Calu3 (cell line): ENCODE measurements at regions of chr18 and their contacts with region 1.

Region 1: DNA sequence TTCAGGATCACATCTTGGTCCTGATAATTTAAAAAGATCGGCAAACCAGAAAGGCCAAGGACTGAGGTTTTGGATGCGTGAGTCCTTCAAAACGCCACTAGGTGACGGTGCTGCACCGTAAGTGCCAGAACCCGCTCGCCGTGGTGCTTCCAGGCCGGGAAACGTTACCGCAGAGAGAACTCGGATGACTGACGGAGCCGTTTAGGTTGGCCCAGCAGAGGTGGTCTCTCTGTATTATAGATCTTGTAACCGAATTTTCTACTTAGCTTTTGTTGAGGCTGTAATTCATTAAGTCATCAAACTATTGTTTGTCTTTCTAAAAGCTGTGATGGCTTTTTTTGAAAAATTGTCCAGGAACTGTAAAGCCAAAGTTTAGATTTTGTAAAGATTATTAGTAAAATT is 39.8 kb upstream of the ADCYAP1 start:
- DNase-seq: peak; percentile 71
- H3K4me3 Mint-ChIP-seq: no peak overlapping the region
- H3K27ac Mint-ChIP-seq: no peak overlapping the region
- H3K4me1 Mint-ChIP-seq: no peaks in the 10 kb centered on the region
- H3K27me3 Mint-ChIP-seq: peaks cover 47% of the 10 kb centered on the region
- CTCF ChIP-seq: peak; percentile 94

Region 2: GRCh38 chr18:839224-840022 is 25.4 kb before region 1 on chr18:
- CTCF ChIA-PET with region 1: no interaction called
- intact Hi-C with region 1: loop called (anchors 1 kb)
- DNase-seq: peak; percentile 91
- H3K4me3 Mint-ChIP-seq: no peak overlapping the region
- H3K27ac Mint-ChIP-seq: no peak overlapping the region
- H3K4me1 Mint-ChIP-seq: no peaks in the 10 kb centered on the region
- H3K27me3 Mint-ChIP-seq: no peaks in the 10 kb centered on the region
- CTCF ChIP-seq: peak; percentile 97

Region 3: DNA sequence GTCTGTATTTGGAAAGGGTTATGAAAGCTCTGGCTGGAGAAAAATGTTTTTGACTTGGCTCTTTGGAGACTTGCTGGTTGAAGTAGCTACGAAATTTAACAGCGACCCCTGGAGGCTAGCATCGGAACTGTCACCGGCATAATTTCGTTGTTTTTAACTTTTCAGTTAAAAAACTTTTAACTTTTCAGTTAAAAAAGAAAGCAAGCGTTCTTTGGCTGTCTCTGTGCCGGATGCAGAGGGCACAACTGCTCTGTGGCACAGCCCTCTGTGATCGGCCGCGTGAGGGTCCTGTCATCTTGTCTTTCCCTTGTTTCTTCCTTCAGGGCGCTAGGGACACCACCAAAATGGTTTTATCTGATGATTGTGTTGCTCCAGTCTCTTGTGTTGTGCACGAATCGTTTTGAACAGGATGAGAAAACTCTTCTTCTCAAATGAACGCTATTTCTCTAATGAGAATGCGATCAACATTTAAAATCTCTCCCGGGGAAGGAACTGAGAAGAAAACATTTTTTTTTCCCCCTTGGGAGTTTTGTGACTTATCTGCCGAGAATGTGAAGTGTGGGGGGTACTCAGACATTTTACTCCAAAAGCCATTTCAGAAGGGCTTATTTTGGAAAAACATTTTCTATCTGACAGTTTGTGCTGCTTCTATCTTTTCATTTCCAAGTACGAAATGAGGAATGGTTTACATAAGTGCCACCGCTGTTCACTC is 96.9 kb after region 1 on chr18:
- CTCF ChIA-PET with region 1: interaction called, 7 read pairs
- intact Hi-C with region 1: loop called (anchors 2 kb)
- DNase-seq: peak; percentile 47
- H3K4me3 Mint-ChIP-seq: no peak overlapping the region
- H3K27ac Mint-ChIP-seq: no peak overlapping the region
- H3K4me1 Mint-ChIP-seq: peaks cover 8% of the 10 kb centered on the region
- H3K27me3 Mint-ChIP-seq: peaks cover 74% of the 10 kb centered on the region
- CTCF ChIP-seq: peak; percentile 92

Region 4: GRCh38 chr18:1019191-1019590 is 154.3 kb after region 1 on chr18:
- CTCF ChIA-PET with region 1: no interaction called
- intact Hi-C with region 1: no loop called
- DNase-seq: no peak
- H3K4me3 Mint-ChIP-seq: no peak overlapping the region
- H3K27ac Mint-ChIP-seq: no peak overlapping the region
- H3K4me1 Mint-ChIP-seq: no peaks in the 10 kb centered on the region
- H3K27me3 Mint-ChIP-seq: peaks cover 45% of the 10 kb centered on the region
- CTCF ChIP-seq: no peak

Region 5: DNA sequence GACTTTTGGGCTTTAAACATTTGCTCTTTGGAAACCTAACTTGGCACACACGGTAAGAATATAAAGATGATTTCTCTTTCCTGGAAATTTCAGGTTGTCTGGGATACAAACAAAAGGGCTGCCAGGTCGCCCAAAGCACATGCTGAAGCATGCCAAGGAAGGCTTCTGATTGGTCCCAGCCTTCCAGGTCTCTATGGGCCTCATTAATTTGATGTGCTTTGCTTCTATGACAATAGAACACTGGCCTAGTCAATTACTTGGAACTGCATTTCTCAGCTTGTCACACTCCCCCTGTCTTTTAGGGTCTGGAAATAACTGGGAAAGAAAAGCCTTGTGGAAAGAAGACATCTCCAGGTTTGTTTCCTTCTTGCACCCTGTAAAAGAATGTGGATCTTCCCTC is 268.7 kb after region 1 on chr18:
- CTCF ChIA-PET with region 1: no interaction called
- intact Hi-C with region 1: no loop called
- DNase-seq: no peak
- H3K4me3 Mint-ChIP-seq: no peak overlapping the region
- H3K27ac Mint-ChIP-seq: no peak overlapping the region
- H3K4me1 Mint-ChIP-seq: no peaks in the 10 kb centered on the region
- H3K27me3 Mint-ChIP-seq: peaks cover 15% of the 10 kb centered on the region
- CTCF ChIP-seq: no peak

Region 6: DNA sequence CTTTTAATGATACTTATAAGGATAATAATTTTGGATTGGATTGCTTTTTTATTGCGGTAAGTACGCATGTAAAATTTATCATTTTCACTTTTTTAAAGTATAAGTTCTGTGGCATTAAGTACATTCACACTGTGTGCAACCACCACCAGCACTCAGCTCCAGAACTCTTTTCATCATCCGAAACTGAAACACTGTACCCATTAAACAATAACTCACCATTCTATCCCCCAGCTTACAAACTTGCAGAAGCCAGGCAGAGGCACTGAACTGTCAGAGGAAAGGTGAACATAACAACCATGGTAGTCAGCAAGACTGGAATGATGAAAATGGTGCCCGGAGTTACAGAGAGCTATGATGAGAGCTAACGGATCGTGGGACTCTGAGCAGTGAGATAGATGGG is 505.7 kb after region 1 on chr18:
- CTCF ChIA-PET with region 1: no interaction called
- intact Hi-C with region 1: loop called (anchors 10 kb)
- DNase-seq: no peak
- H3K4me3 Mint-ChIP-seq: no peak overlapping the region
- H3K27ac Mint-ChIP-seq: no peak overlapping the region
- H3K4me1 Mint-ChIP-seq: no peaks in the 10 kb centered on the region
- H3K27me3 Mint-ChIP-seq: no peaks in the 10 kb centered on the region
- CTCF ChIP-seq: no peak

Region 7: GRCh38 chr18:1513519-1513918 is 648.6 kb after region 1 on chr18:
- CTCF ChIA-PET with region 1: no interaction called
- intact Hi-C with region 1: no loop called
- DNase-seq: no peak
- H3K4me3 Mint-ChIP-seq: no peak overlapping the region
- H3K27ac Mint-ChIP-seq: peak overlapping the region; percentile 29
- H3K4me1 Mint-ChIP-seq: no peaks in the 10 kb centered on the region
- H3K27me3 Mint-ChIP-seq: peaks cover 14% of the 10 kb centered on the region
- CTCF ChIP-seq: peak; percentile 18

Region 8: DNA sequence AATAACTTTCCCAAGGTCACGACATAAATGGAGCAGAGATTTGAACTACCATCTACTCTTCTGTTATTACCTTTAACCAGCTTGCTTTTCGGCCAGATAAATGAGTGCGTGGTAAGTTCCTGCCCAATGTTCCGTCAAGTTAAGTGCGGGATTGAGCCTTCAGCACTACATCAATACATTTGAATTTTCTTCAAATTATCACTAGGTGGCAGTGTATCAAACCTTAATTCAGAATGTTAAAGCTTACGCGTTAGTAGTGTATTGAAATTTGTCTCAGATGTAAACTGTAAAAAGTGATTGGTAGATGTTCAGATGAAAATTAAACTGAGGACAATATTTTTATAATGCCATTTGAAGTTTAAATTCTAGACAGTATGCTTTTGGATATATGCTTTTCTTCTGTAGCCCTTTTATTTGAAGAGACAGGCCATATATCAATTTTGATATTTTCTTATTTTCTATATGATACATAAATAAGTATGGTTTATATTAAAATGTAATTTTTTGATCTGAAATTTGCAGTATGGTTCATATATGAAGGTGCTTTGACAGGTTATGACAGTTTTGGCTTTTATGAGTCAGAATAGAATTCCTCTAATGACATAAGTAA is 721.1 kb after region 1 on chr18:
- CTCF ChIA-PET with region 1: no interaction called
- intact Hi-C with region 1: loop called (anchors 10 kb)
- DNase-seq: no peak
- H3K4me3 Mint-ChIP-seq: no peak overlapping the region
- H3K27ac Mint-ChIP-seq: no peak overlapping the region
- H3K4me1 Mint-ChIP-seq: no peaks in the 10 kb centered on the region
- H3K27me3 Mint-ChIP-seq: peaks cover 24% of the 10 kb centered on the region
- CTCF ChIP-seq: peak; percentile 42

Region 9: GRCh38 chr18:2083691-2084090 is 1218.8 kb after region 1 on chr18:
- CTCF ChIA-PET with region 1: no interaction called
- intact Hi-C with region 1: loop called (anchors 5 kb)
- DNase-seq: peak; percentile 21
- H3K4me3 Mint-ChIP-seq: no peak overlapping the region
- H3K27ac Mint-ChIP-seq: no peak overlapping the region
- H3K4me1 Mint-ChIP-seq: peaks cover 10% of the 10 kb centered on the region
- H3K27me3 Mint-ChIP-seq: no peaks in the 10 kb centered on the region
- CTCF ChIP-seq: peak; percentile 49

Region 10: GRCh38 chr18:2547477-2548087 is 1682.7 kb after region 1 on chr18:
- CTCF ChIA-PET with region 1: no interaction called
- intact Hi-C with region 1: loop called (anchors 5 kb)
- DNase-seq: no peak
- H3K4me3 Mint-ChIP-seq: no peak overlapping the region
- H3K27ac Mint-ChIP-seq: no peak overlapping the region
- H3K4me1 Mint-ChIP-seq: no peaks in the 10 kb centered on the region
- H3K27me3 Mint-ChIP-seq: no peaks in the 10 kb centered on the region
- CTCF ChIP-seq: peak; percentile 71